Activated naive CD4-positive, alpha-beta T cell treated with anti-CD3 and anti-CD28 coated beads, Interleukin-2, amount 10 ng/mL, durations not matched to agents 7 days and 5 days (primary cell): ENCODE measurements at regions of chr7 and their contacts with region 1.

Region 1: GRCh38 chr7:17769918-17770317 is 170.4 kb downstream of the SNX13 start:
- DNase-seq: peak; percentile 76
- H3K4me3 Mint-ChIP-seq: no peak overlapping the region
- H3K27ac Mint-ChIP-seq: no peak overlapping the region
- H3K4me1 Mint-ChIP-seq: peaks cover 2% of the 10 kb centered on the region
- H3K27me3 Mint-ChIP-seq: no peaks in the 10 kb centered on the region

Region 2: GRCh38 chr7:17646253-17646956 is 123.5 kb before region 1 on chr7:
- CTCF ChIA-PET with region 1: no interaction called
- DNase-seq: no peak
- H3K4me3 Mint-ChIP-seq: no peak overlapping the region
- H3K27ac Mint-ChIP-seq: no peak overlapping the region
- H3K4me1 Mint-ChIP-seq: no peaks in the 10 kb centered on the region
- H3K27me3 Mint-ChIP-seq: peaks cover 23% of the 10 kb centered on the region

Region 3: GRCh38 chr7:17985473-17986239 is 215.7 kb after region 1 on chr7:
- CTCF ChIA-PET with region 1: interaction called, 76 read pairs
- DNase-seq: no peak
- H3K4me3 Mint-ChIP-seq: no peak overlapping the region
- H3K27ac Mint-ChIP-seq: no peak overlapping the region
- H3K4me1 Mint-ChIP-seq: no peaks in the 10 kb centered on the region
- H3K27me3 Mint-ChIP-seq: peaks cover 4% of the 10 kb centered on the region

Region 4: GRCh38 chr7:17991866-17992648 is 222.1 kb after region 1 on chr7:
- CTCF ChIA-PET with region 1: interaction called, 76 read pairs
- DNase-seq: peak; percentile 46
- H3K4me3 Mint-ChIP-seq: no peak overlapping the region
- H3K27ac Mint-ChIP-seq: no peak overlapping the region
- H3K4me1 Mint-ChIP-seq: no peaks in the 10 kb centered on the region
- H3K27me3 Mint-ChIP-seq: peaks cover 3% of the 10 kb centered on the region

Region 5: DNA sequence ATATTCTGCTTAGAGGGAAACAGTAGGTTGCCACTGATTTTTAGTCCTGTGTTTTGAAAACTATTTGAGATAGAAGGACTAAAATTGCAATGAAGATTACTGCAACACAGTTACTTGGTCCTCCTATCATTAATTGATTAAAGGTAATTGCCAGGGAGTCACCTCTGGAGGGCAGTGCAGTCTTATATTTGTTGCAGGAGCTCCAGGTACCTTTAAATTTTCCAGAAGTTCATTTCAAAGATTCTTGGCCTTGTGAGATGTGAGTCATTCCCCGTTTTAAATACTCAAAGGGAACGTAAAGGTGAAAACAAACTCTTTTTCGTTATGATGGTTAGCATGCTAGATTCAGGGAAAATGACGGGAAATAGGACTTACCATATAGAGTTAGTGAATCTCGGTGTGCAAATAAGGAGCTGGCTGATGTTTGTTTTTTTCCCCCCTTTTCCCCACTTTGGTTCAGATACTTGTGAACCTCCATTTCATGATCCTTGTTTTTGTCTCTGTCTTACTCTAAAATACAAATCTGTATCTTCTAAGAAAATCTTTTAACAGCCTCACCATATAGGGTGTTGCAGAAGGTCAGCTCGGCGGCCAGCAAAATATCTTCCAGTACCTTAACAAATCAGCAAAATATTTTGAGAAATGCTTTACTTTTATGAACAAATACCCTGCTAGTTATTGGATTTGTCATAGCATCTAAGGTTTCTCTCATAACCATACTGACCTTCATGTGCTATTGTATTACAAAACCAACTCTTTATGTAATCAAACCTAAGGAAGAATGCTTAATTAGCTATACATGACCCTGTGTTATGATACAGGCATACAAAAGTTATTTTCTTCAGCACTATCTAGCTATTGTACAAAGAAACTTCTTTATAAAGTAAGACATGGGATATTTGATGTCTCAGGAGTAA is 582.7 kb after region 1 on chr7:
- CTCF ChIA-PET with region 1: interaction called, 10 read pairs
- DNase-seq: no peak
- H3K4me3 Mint-ChIP-seq: no peak overlapping the region
- H3K27ac Mint-ChIP-seq: no peak overlapping the region
- H3K4me1 Mint-ChIP-seq: peaks cover 7% of the 10 kb centered on the region
- H3K27me3 Mint-ChIP-seq: peaks cover under 1% of the 10 kb centered on the region